ENCODE measurements at regions of chr4 and their contacts with region 1.

Region 1: GRCh38 chr4:61638591-61638990 is 438.5 kb downstream of the ADGRL3 start:
- DNase-seq: no peak
- H3K4me3 ChIP-seq: no peak overlapping the region
- H3K27ac ChIP-seq: no peak overlapping the region
- H3K4me1 ChIP-seq: no peaks in the 10 kb centered on the region
- H3K27me3 ChIP-seq: no peaks in the 10 kb centered on the region
- CTCF ChIP-seq: no peak
- POLR2A ChIP-seq: no peak

Region 2: GRCh38 chr4:61583696-61584095 is 54.9 kb before region 1 on chr4:
- CTCF ChIA-PET with region 1: no interaction called
- POLR2A ChIA-PET with region 1: no interaction called
- dilution Hi-C with region 1: no loop called
- intact Hi-C with region 1: no loop called
- DNase-seq: no peak
- H3K4me3 ChIP-seq: no peak overlapping the region
- H3K27ac ChIP-seq: no peak overlapping the region
- H3K4me1 ChIP-seq: no peaks in the 10 kb centered on the region
- H3K27me3 ChIP-seq: no peaks in the 10 kb centered on the region
- CTCF ChIP-seq: no peak
- POLR2A ChIP-seq: no peak

Region 3: GRCh38 chr4:61661960-61662359 is 23.4 kb after region 1 on chr4:
- CTCF ChIA-PET with region 1: no interaction called
- POLR2A ChIA-PET with region 1: no interaction called
- dilution Hi-C with region 1: no loop called
- intact Hi-C with region 1: loop called (anchors 1 kb)
- DNase-seq: no peak
- H3K4me3 ChIP-seq: no peak overlapping the region
- H3K27ac ChIP-seq: no peak overlapping the region
- H3K4me1 ChIP-seq: no peaks in the 10 kb centered on the region
- H3K27me3 ChIP-seq: no peaks in the 10 kb centered on the region
- CTCF ChIP-seq: no peak
- POLR2A ChIP-seq: no peak

Region 4: GRCh38 chr4:61772126-61772525 is 133.5 kb after region 1 on chr4:
- CTCF ChIA-PET with region 1: no interaction called
- POLR2A ChIA-PET with region 1: no interaction called
- dilution Hi-C with region 1: no loop called
- intact Hi-C with region 1: no loop called
- DNase-seq: no peak
- H3K4me3 ChIP-seq: no peak overlapping the region
- H3K27ac ChIP-seq: no peak overlapping the region
- H3K4me1 ChIP-seq: no peaks in the 10 kb centered on the region
- H3K27me3 ChIP-seq: no peaks in the 10 kb centered on the region
- CTCF ChIP-seq: no peak
- POLR2A ChIP-seq: no peak

Region 5: GRCh38 chr4:62018537-62018936 is 379.9 kb after region 1 on chr4:
- CTCF ChIA-PET with region 1: no interaction called
- POLR2A ChIA-PET with region 1: no interaction called
- dilution Hi-C with region 1: no loop called
- intact Hi-C with region 1: no loop called
- DNase-seq: no peak
- H3K4me3 ChIP-seq: no peak overlapping the region
- H3K27ac ChIP-seq: no peak overlapping the region
- H3K4me1 ChIP-seq: no peaks in the 10 kb centered on the region
- H3K27me3 ChIP-seq: no peaks in the 10 kb centered on the region
- CTCF ChIP-seq: no peak
- POLR2A ChIP-seq: no peak